Calu3 (cell line): ENCODE measurements at regions of chr12 and their contacts with region 1.

Region 1: GRCh38 chr12:119902084-119902509 is 25.0 kb upstream of the CIT start:
- DNase-seq: peak; percentile 81
- H3K4me3 Mint-ChIP-seq: no peak overlapping the region
- H3K27ac Mint-ChIP-seq: no peak overlapping the region
- H3K4me1 Mint-ChIP-seq: peaks cover 8% of the 10 kb centered on the region
- H3K27me3 Mint-ChIP-seq: peaks cover 19% of the 10 kb centered on the region
- CTCF ChIP-seq: peak; percentile 77

Region 2: GRCh38 chr12:119804011-119804641 is 98.0 kb before region 1 on chr12:
- CTCF ChIA-PET with region 1: interaction called, 3 read pairs
- intact Hi-C with region 1: loop called (anchors 10 kb)
- DNase-seq: peak; percentile 76
- H3K4me3 Mint-ChIP-seq: no peak overlapping the region
- H3K27ac Mint-ChIP-seq: no peak overlapping the region
- H3K4me1 Mint-ChIP-seq: peaks cover 29% of the 10 kb centered on the region
- H3K27me3 Mint-ChIP-seq: no peaks in the 10 kb centered on the region
- CTCF ChIP-seq: peak; percentile 49

Region 3: DNA sequence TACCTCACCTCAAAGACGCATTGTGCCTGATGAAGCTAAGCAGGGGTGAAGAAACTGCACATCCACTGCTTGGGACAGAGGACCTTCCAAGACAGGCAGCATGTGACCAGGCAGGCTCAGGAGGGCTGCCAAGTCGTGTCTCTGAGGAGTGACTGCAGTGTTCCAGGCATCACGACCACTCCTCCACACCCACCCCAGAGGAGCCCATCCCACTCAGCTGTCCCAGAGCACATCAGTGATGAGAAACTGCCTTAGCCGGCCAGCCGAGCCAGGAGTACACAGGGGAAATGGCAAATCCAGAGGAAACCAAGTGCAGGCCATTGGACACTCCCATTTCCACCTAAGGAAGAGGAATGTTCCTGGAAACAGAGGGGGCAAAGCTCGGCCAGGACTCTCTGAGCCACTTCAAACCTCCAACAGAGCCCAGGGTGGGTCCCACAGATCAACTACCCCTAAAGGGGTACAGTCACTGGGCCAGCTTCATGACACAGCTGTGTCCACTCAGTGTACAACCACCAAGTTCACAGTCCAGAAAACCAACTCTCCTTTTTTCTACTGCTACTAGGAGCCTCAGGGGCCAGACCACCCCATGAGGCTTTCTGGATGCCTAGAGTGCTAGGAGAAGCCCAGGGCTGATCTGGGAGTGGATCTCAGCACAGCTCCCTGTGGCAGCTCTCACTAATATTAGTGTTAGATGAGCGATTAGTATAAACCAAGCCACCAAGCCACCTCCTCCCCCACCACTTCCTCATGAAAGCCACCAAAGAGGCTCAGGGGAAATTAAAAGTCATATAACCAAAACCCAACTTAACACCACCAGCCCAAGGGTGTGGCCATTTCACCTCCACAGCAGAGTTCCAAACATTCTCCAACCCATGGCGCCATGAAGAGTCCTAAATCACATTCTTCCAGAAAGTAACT is 348.0 kb after region 1 on chr12:
- CTCF ChIA-PET with region 1: no interaction called
- intact Hi-C with region 1: no loop called
- DNase-seq: no peak
- H3K4me3 Mint-ChIP-seq: no peak overlapping the region
- H3K27ac Mint-ChIP-seq: no peak overlapping the region
- H3K4me1 Mint-ChIP-seq: peaks cover 49% of the 10 kb centered on the region
- H3K27me3 Mint-ChIP-seq: no peaks in the 10 kb centered on the region
- CTCF ChIP-seq: no peak

Region 4: GRCh38 chr12:120453977-120454376 is 551.9 kb after region 1 on chr12:
- CTCF ChIA-PET with region 1: no interaction called
- intact Hi-C with region 1: no loop called
- DNase-seq: peak; percentile 19
- H3K4me3 Mint-ChIP-seq: no peak overlapping the region
- H3K27ac Mint-ChIP-seq: no peak overlapping the region
- H3K4me1 Mint-ChIP-seq: no peaks in the 10 kb centered on the region
- H3K27me3 Mint-ChIP-seq: no peaks in the 10 kb centered on the region
- CTCF ChIP-seq: peak; percentile 49